Heart right ventricle (tissue), 16 donors: ENCODE measurements at regions of chrX and their contacts with region 1.

Region 1: GRCh38 chrX:13750204-13750603 is 15.7 kb downstream of the OFD1 start:
- DNase-seq: no peak
- ATAC-seq: no peak
- H3K4me3 ChIP-seq: no peak overlapping the region
- H3K27ac ChIP-seq: no peak overlapping the region
- H3K4me1 ChIP-seq: peaks cover 0 to 5% (median 0%) of the 10 kb centered on the region in 9 donors
- H3K27me3 ChIP-seq: peaks cover 0 to 2% (median 0%) of the 10 kb centered on the region in 7 donors
- CTCF ChIP-seq: peak; percentile 18 to 61 (median 53)

Region 2: GRCh38 chrX:12162420-12162819 is 1587.8 kb before region 1 on chrX:
- intact Hi-C with region 1: no loop called
- DNase-seq: no peak
- ATAC-seq: no peak
- H3K4me3 ChIP-seq: no peak overlapping the region
- H3K27ac ChIP-seq: no peak overlapping the region
- H3K4me1 ChIP-seq: no peaks in the 10 kb centered on the region
- H3K27me3 ChIP-seq: no peaks in the 10 kb centered on the region
- CTCF ChIP-seq: no peak

Region 3: DNA sequence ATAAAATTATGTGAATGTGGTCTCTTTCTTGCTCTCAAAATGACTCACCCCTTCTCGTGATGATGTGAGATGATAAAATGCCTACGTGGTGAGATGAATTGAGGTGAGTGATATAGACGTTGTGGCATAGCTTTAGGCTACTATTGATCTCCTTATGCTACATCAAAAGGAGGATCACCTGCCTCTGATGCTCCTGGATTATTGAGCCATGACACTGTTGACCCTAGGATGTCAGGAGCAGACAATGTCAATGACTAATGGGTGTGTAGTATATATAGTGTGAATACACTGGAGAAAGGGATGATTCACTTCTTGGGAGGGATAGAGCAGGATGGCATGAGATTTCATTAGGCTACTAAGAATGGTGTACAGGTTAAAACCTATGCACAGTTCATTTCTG is 1169.7 kb before region 1 on chrX:
- intact Hi-C with region 1: loop called in 1 of 10 experiments (anchors 5 kb)
- DNase-seq: no peak
- ATAC-seq: no peak
- H3K4me3 ChIP-seq: no peak overlapping the region
- H3K27ac ChIP-seq: no peak overlapping the region
- H3K4me1 ChIP-seq: no peaks in the 10 kb centered on the region
- H3K27me3 ChIP-seq: peaks cover 0 to 6% (median 0%) of the 10 kb centered on the region in 7 donors
- CTCF ChIP-seq: no peak

Region 4: GRCh38 chrX:13506574-13506973 is 243.6 kb before region 1 on chrX:
- intact Hi-C with region 1: loop called in 3 of 10 experiments (anchors 10 kb)
- DNase-seq: peak; percentile 18
- ATAC-seq: no peak
- H3K4me3 ChIP-seq: no peak overlapping the region
- H3K27ac ChIP-seq: no peak overlapping the region
- H3K4me1 ChIP-seq: peaks cover 0 to 4% (median 0%) of the 10 kb centered on the region in 9 donors
- H3K27me3 ChIP-seq: peaks cover 0 to 38% (median 0%) of the 10 kb centered on the region in 7 donors
- CTCF ChIP-seq: peak; percentile 54 to 84 (median 71)

Region 5: DNA sequence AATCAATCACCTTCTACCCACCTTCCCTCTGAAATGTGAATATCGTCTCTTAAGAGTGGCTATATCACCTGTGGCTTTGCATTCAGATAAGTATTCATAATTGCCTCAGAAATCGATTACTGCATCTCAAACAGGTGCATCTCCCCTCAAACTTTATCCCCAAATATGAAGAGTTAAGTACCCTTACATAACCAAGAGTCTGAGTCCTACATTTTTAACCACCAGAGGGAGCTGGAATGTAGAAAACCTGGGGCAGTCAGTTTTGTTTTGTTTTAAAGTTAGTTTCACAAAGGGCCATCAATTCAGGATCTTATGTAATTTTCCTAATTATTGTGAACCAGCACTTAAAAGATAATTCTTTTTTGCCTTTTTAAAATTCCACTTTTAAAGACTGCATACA is 91.6 kb before region 1 on chrX:
- intact Hi-C with region 1: loop called in 7 of 10 experiments (anchors 2 to 10 kb)
- DNase-seq: peak in 1 of 2 donors; percentile 11
- ATAC-seq: peak in 2 of 8 donors; percentile 53 to 67
- H3K4me3 ChIP-seq: no peak overlapping the region
- H3K27ac ChIP-seq: peak overlapping the region in 8 of 10 donors; percentile 9 to 69 (median 40)
- H3K4me1 ChIP-seq: peaks cover 0 to 23% (median 8%) of the 10 kb centered on the region in 9 donors
- H3K27me3 ChIP-seq: peaks cover 0 to 4% (median 0%) of the 10 kb centered on the region in 7 donors
- CTCF ChIP-seq: peak; percentile 37 to 71 (median 69)

Region 6: DNA sequence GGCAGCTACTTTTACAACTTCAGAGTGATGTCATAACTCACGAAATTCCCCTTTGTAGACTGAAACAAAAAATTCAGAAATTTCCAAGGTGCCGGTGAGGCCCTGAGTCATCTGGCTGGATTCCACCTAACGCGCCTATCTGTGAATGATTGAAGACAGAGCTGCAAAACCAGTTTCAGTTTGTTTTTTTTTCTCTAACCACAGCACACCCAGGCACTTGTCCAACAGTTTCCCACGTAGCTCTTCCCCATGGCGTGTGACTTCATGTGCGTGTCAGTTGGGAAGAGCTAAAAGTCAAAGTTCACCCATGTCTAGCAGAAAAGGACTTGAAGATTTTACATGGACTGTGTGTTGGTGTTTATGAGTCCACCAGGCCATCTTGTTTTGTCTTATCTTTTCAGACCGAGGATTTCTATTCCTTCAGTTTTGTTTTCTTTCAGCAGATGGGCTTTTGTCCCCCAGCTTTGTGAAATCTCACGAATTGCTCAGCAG is 80.9 kb before region 1 on chrX:
- intact Hi-C with region 1: loop called in 1 of 10 experiments (anchors 10 kb)
- DNase-seq: peak in 1 of 2 donors; percentile 59
- ATAC-seq: peak in 7 of 8 donors; percentile 67 to 91 (median 85)
- H3K4me3 ChIP-seq: no peak overlapping the region
- H3K27ac ChIP-seq: peak overlapping the region in 8 of 10 donors; percentile 10 to 64 (median 54)
- H3K4me1 ChIP-seq: peaks cover 0 to 14% (median 0%) of the 10 kb centered on the region in 9 donors
- H3K27me3 ChIP-seq: peaks cover 0 to 30% (median 0%) of the 10 kb centered on the region in 7 donors
- CTCF ChIP-seq: no peak

Region 7: DNA sequence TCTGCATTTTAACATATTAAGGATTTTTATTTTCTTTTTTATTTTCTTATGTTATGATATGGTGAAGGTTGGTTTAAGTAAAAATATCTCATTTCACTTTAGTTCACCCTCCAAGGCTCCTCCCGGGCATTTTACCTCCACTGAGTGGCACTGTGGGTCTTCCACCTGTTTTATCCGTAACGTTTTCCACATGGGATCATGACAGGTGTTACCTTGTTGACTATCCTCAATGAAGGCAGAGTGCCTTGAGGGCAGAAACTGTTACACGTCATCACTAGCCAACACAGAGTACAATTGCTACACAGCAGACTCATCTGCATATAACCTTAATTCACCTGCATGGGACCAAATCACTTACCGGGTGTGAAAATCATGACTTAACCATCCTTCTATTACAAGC is 173.6 kb after region 1 on chrX:
- intact Hi-C with region 1: no loop called
- DNase-seq: no peak
- ATAC-seq: no peak
- H3K4me3 ChIP-seq: no peak overlapping the region
- H3K27ac ChIP-seq: no peak overlapping the region
- H3K4me1 ChIP-seq: no peaks in the 10 kb centered on the region
- H3K27me3 ChIP-seq: peaks cover 0 to 24% (median 0%) of the 10 kb centered on the region in 7 donors
- CTCF ChIP-seq: no peak